ENCODE measurements at regions of chr1 and their contacts with region 1.

Region 1: DNA sequence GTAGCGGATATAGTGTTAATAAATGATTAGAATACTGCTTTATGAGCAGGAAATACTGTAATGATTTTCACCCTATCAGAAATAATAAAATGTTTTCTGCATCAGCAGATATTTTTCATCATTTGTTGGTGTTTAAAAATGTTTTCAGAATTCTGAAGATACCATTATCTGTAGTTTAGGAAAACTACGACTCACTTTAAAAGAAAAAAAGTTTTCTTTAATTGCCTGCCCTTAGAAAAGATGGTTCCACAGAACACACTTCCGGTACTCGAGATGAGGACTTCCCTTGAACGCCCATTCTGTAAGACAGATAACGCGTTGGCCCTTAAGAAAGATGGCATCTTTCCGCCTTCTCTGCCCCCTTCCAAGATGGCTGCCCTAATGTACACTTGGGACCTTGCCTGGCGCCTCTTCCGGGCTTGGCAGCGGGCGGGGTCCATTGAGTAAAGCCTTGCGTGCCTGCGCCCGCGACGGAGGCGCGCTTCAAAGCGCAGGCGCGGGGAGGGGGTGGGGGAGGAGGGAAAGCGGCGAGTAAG is at the start of gene SZRD1:
- DNase-seq: peak; percentile 94
- H3K4me3 ChIP-seq: peak within 1 kb of the TSS; percentile 76 to 78
- H3K27ac ChIP-seq: peak within 1 kb of the TSS; percentile 95 to 97
- H3K4me1 ChIP-seq: peaks cover 9 to 11% of the 10 kb centered on the region in 2 experiments; a peak in 3 of 4 replicates
- H3K27me3 ChIP-seq: no peaks in the 10 kb centered on the region
- CTCF ChIP-seq: no peak
- EP300 ChIP-seq: no peak
- RAD21 ChIP-seq: no peak
- polyA plus RNA-seq, gene SZRD1: 100 and 119 TPM in 2 replicates

Region 2: DNA sequence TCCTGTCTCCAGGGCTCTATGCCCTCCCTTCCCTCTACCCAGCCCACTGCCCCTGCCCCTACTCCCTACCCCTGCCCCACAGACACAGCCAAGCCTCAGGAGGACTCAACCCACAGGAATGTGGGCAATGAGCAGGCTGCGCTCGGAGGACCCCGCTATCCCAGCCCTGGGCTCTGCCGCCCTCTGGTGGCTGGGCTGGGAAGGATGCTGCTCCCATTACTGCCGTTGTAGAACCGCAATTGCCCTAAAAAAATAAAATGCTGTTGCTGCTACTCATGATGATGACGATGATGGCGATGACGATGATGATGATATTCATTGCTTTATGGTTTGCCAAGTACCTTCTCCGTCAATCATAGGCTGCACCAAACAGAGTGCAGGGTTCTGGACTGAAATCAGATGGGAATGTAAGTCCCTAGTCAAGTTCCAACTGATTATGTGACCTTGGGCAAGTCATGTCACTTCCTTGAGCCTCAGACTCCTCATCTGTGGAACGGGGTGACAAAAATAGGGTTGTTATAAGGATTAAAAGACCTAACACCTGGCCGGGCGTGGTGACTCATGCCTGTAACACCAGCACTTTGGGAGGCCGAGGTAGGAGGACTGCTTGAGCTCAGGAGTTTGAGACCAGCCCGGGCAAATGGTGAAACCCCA is 178.9 kb before region 1 on chr1:
- CTCF ChIA-PET with region 1: interaction called, 37 read pairs
- POLR2A ChIA-PET with region 1: no interaction called
- DNase-seq: peak; percentile 86
- H3K4me3 ChIP-seq: peak overlapping the region in 1 of 2 experiments; percentile 7; a peak in 1 of 4 replicates
- H3K27ac ChIP-seq: no peak overlapping the region
- H3K4me1 ChIP-seq: peaks cover 0 to 26% of the 10 kb centered on the region in 2 experiments; a peak in 2 of 4 replicates
- H3K27me3 ChIP-seq: no peaks in the 10 kb centered on the region
- CTCF ChIP-seq: peak; percentile 98
- EP300 ChIP-seq: no peak
- RAD21 ChIP-seq: peak; percentile 99

Region 3: GRCh38 chr1:16206547-16207317 is 160.1 kb before region 1 on chr1:
- CTCF ChIA-PET with region 1: interaction called, 13 read pairs
- POLR2A ChIA-PET with region 1: no interaction called
- DNase-seq: peak; percentile 97
- H3K4me3 ChIP-seq: peak overlapping the region; percentile 53 to 63
- H3K27ac ChIP-seq: peak overlapping the region; percentile 84 to 90
- H3K4me1 ChIP-seq: peaks cover 0 to 22% of the 10 kb centered on the region in 2 experiments; a peak in 1 of 4 replicates
- H3K27me3 ChIP-seq: no peaks in the 10 kb centered on the region
- CTCF ChIP-seq: no peak
- EP300 ChIP-seq: 0 out of 4 replicates have a peak, but pooled peaks of 1 of the 2 experiments have one; percentile 2
- RAD21 ChIP-seq: no peak

Region 4: DNA sequence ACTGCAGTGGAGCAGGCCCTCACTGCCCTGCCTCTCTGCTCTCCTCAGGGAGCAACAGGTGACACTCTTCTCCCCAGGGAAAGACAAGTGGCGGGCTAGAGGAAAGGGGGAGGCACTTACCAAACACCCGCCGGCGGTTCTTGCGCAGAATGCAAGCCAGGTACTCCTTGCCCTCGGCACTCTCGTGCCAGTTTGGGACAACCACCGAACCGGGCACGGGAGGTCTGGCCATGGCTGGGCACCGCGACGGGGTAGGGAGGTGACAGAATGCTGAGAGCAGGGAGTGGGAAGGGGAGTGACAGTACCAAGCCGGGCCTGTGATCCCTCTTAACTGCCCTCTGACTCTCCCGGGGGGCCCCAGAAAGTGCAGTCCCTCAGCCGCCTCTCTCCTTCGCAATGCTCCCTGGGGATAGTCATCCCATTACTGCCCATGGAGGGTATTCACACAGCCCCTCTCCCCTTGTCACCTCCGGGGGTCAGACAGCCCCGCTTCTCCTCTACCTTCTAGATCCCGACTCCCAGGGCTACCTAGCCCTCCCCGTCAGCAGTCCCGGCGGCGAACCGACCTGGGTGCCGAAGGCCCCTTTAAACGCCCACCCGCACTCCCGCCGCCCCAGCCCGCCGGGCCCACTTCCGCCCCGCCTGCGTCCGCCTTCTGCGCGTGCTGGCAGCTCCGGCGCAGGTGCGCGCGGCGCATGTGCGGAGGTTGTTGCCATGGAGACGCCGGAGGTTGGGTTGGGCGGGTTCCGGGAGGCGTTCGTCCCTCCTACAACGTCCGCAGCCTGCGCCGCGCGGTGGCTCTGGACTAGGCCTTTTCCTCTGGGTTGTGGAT is 130.1 kb before region 1 on chr1 and contains the start of gene CPLANE2:
- CTCF ChIA-PET with region 1: interaction called, 25 read pairs
- POLR2A ChIA-PET with region 1: no interaction called
- DNase-seq: peak; percentile 97
- H3K4me3 ChIP-seq: peak within 1 kb of the TSS; percentile 69 to 92
- H3K27ac ChIP-seq: peak within 1 kb of the TSS; percentile 87 to 92
- H3K4me1 ChIP-seq: peaks cover 6 to 22% of the 10 kb centered on the region in 2 experiments
- H3K27me3 ChIP-seq: no peaks in the 10 kb centered on the region
- CTCF ChIP-seq: no peak
- EP300 ChIP-seq: no peak
- RAD21 ChIP-seq: peak; percentile 26; the same call in 1 of the 2 replicates
- polyA plus RNA-seq, gene CPLANE2: 6.5 and 8.6 TPM in 2 replicates

Region 5: GRCh38 chr1:16351994-16352841 is 14.6 kb before region 1 on chr1 and contains the start of gene FBXO42:
- CTCF ChIA-PET with region 1: interaction called, 46 read pairs
- POLR2A ChIA-PET with region 1: interaction called, 4 read pairs
- DNase-seq: peak; percentile 97
- H3K4me3 ChIP-seq: peak within 1 kb of the TSS; percentile 69 to 82
- H3K27ac ChIP-seq: peak within 1 kb of the TSS; percentile 75 to 92
- H3K4me1 ChIP-seq: peaks cover 6 to 18% of the 10 kb centered on the region in 2 experiments; a peak in 3 of 4 replicates
- H3K27me3 ChIP-seq: no peaks in the 10 kb centered on the region
- CTCF ChIP-seq: peak; percentile 52
- EP300 ChIP-seq: no peak; a peak in 1 of 4 replicates
- RAD21 ChIP-seq: peak; percentile 6; the same call in 1 of the 2 replicates
- polyA plus RNA-seq, gene FBXO42: 8.6 and 10.3 TPM in 2 replicates

Region 6: DNA sequence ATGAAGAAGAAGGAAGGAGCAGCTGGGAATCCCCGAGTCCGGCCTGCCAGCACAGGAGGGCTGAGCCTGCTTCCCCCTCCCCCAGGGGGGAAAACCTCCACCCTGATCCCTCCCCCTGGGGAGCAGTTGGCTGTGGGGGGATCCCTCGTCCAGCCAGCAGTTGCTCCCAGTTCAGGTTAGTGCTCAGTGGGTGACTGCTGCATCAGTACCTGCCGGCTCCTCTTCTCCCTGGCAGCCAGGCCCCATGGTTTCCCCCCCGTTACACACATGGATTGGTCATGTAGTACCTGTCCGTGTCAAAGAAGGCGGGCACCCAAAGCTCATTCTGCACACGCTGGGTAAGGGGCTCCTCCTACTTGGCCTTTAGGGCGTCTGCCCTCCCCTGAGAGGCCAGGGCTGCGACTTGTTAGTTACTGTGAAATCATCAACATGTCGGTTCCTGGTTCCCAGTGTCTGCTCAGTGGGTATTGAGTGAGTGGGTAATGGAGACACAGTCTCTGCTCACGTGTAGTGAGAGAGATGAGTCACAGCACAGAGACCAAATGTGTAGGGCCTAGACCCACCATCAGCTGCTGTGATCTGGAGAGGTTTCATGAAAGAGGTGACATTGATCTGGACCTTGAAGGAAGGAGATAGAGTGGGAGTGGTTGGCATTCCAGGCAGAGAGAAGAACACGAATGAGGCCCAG is 85.2 kb after region 1 on chr1:
- CTCF ChIA-PET with region 1: no interaction called
- POLR2A ChIA-PET with region 1: no interaction called
- DNase-seq: no peak
- H3K4me3 ChIP-seq: no peak overlapping the region
- H3K27ac ChIP-seq: no peak overlapping the region
- H3K4me1 ChIP-seq: no peaks in the 10 kb centered on the region
- H3K27me3 ChIP-seq: no peaks in the 10 kb centered on the region
- CTCF ChIP-seq: no peak
- EP300 ChIP-seq: no peak
- RAD21 ChIP-seq: no peak

Measured in SK-N-SH (cell line).